SK-N-SH (cell line): ENCODE measurements at regions of chr7 and their contacts with region 1.

Region 1: DNA sequence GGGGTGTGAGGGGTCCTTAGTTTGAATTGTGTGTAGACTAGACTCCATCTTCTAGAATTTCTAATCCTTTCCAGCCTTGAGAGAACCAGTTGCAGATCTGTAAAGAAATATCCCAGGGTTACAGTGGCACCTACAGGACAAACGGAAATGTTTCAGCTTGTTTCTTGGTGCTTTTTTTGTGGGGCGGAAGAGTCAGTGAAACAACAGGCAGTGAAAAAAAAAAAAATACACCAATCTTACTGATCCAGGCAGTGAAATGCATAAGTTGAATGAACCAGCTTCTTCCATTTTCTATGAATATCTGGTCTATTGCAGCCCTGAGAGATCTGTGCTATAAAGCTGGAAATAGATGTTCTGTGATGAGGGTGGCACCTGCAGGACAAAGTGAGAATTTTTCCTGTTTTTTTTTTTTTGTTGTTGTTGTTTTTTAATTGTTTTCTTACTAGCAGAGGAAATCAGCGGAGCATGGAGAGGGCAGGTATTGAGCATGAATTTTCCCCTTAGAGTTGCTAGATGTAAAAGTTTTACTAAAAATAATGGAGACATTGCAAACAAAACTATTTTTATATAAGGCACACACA is 81.9 kb upstream of the DYNC1I1 start:
- DNase-seq: peak; percentile 27
- H3K4me3 ChIP-seq: peak overlapping the region in 1 of 2 experiments; percentile 23; a peak in 1 of 4 replicates
- H3K27ac ChIP-seq: no peak overlapping the region
- H3K4me1 ChIP-seq: peaks cover 0 to 6% of the 10 kb centered on the region in 2 experiments; a peak in 2 of 4 replicates
- H3K27me3 ChIP-seq: 0 out of 2 replicates have a peak, but pooled peaks cover 7% of the 10 kb centered on the region
- CTCF ChIP-seq: peak; percentile 96
- EP300 ChIP-seq: no peak
- RAD21 ChIP-seq: no peak; the same call in none of the 2 replicates

Region 2: GRCh38 chr7:95517458-95517857 is 173.0 kb before region 1 on chr7:
- CTCF ChIA-PET with region 1: interaction called, 530 read pairs
- POLR2A ChIA-PET with region 1: no interaction called
- DNase-seq: no peak
- H3K4me3 ChIP-seq: no peak overlapping the region
- H3K27ac ChIP-seq: no peak overlapping the region
- H3K4me1 ChIP-seq: no peaks in the 10 kb centered on the region
- H3K27me3 ChIP-seq: peaks cover 37% of the 10 kb centered on the region
- CTCF ChIP-seq: no peak
- EP300 ChIP-seq: no peak
- RAD21 ChIP-seq: no peak

Region 3: DNA sequence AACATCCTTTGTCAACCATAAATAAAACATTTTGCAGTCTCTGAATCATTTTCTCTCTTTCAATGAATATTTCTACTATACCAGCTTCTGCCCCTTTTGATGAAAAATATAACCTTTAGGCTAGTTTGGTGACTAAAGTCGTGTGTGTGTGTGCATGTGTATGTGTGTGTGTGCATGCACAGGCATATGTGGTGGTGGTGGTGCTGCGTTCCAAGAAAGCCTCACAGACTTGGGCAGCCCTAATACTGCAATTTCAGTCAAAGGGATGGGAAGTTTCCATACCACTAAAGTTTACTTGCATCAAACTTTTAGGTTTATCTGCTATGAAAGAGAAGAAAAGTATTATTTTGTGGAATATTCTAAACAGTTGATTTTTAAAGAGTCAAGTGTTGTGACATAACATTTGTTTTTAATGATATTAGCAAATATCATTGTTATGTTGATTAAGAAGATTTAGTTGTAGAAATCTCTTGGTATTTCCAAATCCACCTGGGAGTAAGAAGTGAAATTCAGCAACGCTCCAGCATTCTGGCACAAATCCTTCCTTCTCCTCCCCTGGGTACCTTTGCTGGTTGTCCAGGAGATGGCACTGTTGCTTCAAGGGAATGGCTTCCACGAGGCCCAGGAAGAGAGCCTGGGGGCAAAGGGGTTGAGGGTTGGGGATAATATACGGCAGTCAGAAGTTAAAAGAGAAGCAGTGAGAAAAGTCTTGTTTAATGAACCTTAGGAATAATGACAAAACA is 163.3 kb before region 1 on chr7:
- CTCF ChIA-PET with region 1: interaction called, 530 read pairs
- POLR2A ChIA-PET with region 1: no interaction called
- DNase-seq: peak; percentile 77
- H3K4me3 ChIP-seq: no peak overlapping the region; a peak in 1 of 4 replicates
- H3K27ac ChIP-seq: no peak overlapping the region
- H3K4me1 ChIP-seq: peaks cover 0 to 3% of the 10 kb centered on the region in 2 experiments; a peak in 1 of 4 replicates
- H3K27me3 ChIP-seq: peaks cover 67% of the 10 kb centered on the region
- CTCF ChIP-seq: peak; percentile 99
- EP300 ChIP-seq: no peak
- RAD21 ChIP-seq: peak; percentile 94

Region 4: DNA sequence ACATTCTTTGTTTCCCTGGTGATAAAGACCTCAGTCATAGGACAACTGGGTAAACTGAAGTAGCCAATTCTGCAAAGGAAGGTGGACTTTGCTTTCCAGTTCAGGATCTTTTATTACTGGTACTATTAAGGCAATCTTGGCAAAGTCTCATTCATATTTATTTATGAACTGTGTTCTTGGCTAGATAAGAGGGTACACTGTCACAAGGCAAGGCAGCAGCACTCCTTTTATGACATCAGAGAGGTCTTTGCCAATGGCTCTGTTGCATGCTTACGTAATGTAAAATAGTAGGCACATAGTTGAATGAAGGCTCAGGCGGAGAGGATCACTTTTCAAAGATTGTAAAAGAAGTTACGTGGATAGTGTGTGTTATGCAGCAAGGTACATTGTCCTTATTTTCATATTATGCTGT is 30.4 kb before region 1 on chr7:
- CTCF ChIA-PET with region 1: interaction called, 10 read pairs
- POLR2A ChIA-PET with region 1: no interaction called
- DNase-seq: no peak
- H3K4me3 ChIP-seq: no peak overlapping the region
- H3K27ac ChIP-seq: no peak overlapping the region
- H3K4me1 ChIP-seq: no peaks in the 10 kb centered on the region
- H3K27me3 ChIP-seq: peaks cover 29% of the 10 kb centered on the region; the same call in 1 of the 2 replicates
- CTCF ChIP-seq: no peak
- EP300 ChIP-seq: no peak
- RAD21 ChIP-seq: no peak

Region 5: DNA sequence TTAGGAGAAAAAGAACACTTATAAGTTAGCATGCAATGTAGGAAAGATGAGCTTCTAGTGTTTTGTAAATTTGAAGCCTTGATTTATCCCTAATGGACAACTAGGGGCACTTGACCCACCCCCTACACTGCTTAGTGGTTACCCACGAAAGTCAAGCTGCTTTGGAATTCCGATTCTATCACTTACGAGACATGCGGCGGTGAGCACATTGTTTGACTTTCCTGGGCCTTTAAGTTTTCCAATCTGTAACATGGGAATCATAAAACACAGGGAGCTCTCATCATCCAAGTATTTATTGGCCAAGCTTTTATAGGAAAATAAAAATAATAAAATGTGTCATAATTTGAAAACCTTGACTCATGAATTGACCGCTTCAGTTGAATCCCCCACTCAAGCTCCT is 15.4 kb before region 1 on chr7:
- CTCF ChIA-PET with region 1: interaction called, 39 read pairs
- POLR2A ChIA-PET with region 1: no interaction called
- DNase-seq: no peak
- H3K4me3 ChIP-seq: no peak overlapping the region
- H3K27ac ChIP-seq: no peak overlapping the region
- H3K4me1 ChIP-seq: no peaks in the 10 kb centered on the region
- H3K27me3 ChIP-seq: peaks cover 23% of the 10 kb centered on the region; the same call in 1 of the 2 replicates
- CTCF ChIP-seq: no peak
- EP300 ChIP-seq: no peak
- RAD21 ChIP-seq: no peak

Region 6: GRCh38 chr7:95700917-95701316 is 10.5 kb after region 1 on chr7:
- CTCF ChIA-PET with region 1: interaction called, 39 read pairs
- POLR2A ChIA-PET with region 1: no interaction called
- DNase-seq: no peak
- H3K4me3 ChIP-seq: no peak overlapping the region
- H3K27ac ChIP-seq: no peak overlapping the region
- H3K4me1 ChIP-seq: peaks cover 0 to 4% of the 10 kb centered on the region in 2 experiments; a peak in 2 of 4 replicates
- H3K27me3 ChIP-seq: no peaks in the 10 kb centered on the region
- CTCF ChIP-seq: no peak
- EP300 ChIP-seq: peak in 1 of 2 experiments; percentile 39; a peak in 1 of 4 replicates
- RAD21 ChIP-seq: no peak